ENCODE measurements at regions of chr6 and their contacts with region 1.

Region 1: DNA sequence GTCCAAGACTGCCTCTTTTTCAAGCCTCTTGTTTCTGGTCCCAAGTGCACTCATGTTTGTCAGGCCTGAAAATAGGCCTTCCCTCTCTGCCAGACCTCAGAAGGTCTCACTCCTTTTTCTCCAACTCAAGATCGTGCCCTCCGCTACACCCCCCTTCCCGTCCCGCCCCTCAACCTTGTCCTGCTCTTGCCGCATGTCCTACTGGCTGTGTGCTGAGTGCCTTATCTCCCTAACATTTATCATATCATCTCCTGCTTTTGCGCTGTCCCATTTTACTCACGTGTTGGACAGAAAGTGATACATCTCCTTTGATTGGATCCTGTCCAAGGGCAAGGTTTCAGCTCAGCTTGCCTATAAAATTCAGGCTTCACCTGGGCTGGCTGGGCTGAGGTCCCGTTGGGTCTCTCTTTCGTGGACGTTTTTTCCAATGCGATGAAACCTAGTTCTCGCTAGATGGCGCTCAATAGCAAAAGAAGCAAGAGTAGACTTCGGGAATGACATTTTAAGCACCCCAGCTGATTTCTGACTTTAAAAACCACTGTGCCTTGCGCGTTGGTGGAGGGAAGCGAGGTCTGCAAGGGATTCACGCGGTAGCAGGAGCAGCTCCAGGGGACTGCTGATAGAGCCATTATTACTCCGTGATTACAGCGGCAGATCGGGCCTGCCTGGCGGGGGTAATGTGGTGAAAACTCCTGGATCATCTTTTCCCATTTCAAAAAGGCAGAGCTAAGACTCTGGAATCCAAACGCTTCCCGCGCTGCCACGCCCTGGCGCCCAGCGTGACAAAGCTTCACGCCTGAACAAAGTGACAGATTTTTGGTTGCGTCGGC is 137.6 kb downstream of the IMPG1 start:
- DNase-seq: peak; percentile 16
- H3K4me3 ChIP-seq: peak overlapping the region in 3 of 4 donors; percentile 11 to 34 (median 14)
- H3K27ac ChIP-seq: no peak overlapping the region
- H3K4me1 ChIP-seq: peaks cover 0 to 8% (median 5%) of the 10 kb centered on the region in 4 donors
- H3K27me3 ChIP-seq: peaks cover 8% of the 10 kb centered on the region
- CTCF ChIP-seq: peak; percentile 38 to 66 (median 57)
- EP300 ChIP-seq: no peak
- POLR2A ChIP-seq: no peak

Region 2: DNA sequence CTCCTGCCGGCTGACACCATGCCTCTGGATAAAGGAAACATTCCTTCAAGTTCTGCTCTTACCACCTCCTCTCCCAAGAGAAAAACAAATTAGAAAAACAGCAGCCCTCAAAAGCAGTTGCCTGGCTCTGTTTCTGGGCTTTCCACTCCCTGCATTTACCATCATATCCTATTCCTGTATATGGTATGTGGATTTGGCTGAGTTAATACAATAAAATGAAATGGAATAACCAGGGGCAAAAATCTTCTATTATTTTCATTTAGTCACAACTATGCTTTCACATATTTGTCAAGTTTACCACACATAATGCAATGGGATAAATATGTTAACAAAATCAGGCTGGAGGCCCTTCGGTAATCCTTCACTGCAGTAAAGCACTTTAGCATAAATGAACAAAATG is 763.3 kb before region 1 on chr6:
- in situ Hi-C with region 1: no loop called
- intact Hi-C with region 1: loop called (anchors 5 kb)
- DNase-seq: no peak
- H3K4me3 ChIP-seq: no peak overlapping the region
- H3K27ac ChIP-seq: peak overlapping the region in 3 of 4 donors; percentile 14 to 38 (median 17)
- H3K4me1 ChIP-seq: peaks cover 0 to 22% (median 3%) of the 10 kb centered on the region in 4 donors
- H3K27me3 ChIP-seq: no peaks in the 10 kb centered on the region
- CTCF ChIP-seq: no peak
- EP300 ChIP-seq: no peak
- POLR2A ChIP-seq: no peak

Region 3: GRCh38 chr6:75631859-75632635 is 302.8 kb before region 1 on chr6:
- in situ Hi-C with region 1: no loop called
- intact Hi-C with region 1: no loop called
- DNase-seq: no peak
- H3K4me3 ChIP-seq: no peak overlapping the region
- H3K27ac ChIP-seq: no peak overlapping the region
- H3K4me1 ChIP-seq: peaks cover 0 to 6% (median 0%) of the 10 kb centered on the region in 4 donors
- H3K27me3 ChIP-seq: no peaks in the 10 kb centered on the region
- CTCF ChIP-seq: no peak
- EP300 ChIP-seq: no peak
- POLR2A ChIP-seq: no peak

Region 4: GRCh38 chr6:75808507-75808906 is 126.4 kb before region 1 on chr6:
- in situ Hi-C with region 1: no loop called
- intact Hi-C with region 1: no loop called
- DNase-seq: no peak
- H3K4me3 ChIP-seq: no peak overlapping the region
- H3K27ac ChIP-seq: no peak overlapping the region
- H3K4me1 ChIP-seq: no peaks in the 10 kb centered on the region
- H3K27me3 ChIP-seq: no peaks in the 10 kb centered on the region
- CTCF ChIP-seq: no peak
- EP300 ChIP-seq: no peak
- POLR2A ChIP-seq: no peak

Region 5: DNA sequence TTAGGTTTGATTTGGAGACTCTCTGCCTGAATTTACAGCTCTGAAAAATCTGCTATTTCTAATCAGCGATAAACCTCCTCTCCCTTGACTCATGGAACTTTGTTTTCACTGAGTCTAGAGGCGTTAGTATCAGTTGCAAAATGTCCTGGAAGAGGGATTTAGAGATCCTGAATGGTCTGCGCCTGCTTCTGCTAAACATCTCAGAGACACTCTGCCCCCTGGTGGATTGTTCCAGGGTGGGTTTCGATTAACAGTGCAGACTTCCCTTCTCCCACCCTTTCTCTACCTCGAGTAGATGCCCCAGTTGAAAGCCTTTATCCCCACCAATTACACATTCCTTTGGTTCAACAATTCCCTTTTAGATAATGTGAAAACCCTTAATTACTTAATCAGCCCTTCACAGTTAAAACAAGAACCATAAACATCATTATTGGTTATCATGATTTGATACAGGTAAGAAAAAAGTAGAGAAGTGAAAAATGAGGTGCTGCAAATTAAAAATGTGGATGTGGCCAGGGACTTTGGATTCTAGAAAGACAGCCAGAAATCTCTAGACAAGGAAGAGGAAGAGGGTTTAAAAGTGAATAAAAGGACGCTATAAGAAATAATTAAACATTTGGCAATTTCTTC is 1523.0 kb after region 1 on chr6:
- in situ Hi-C with region 1: loop called in 3 of 4 experiments (anchors 25 kb)
- intact Hi-C with region 1: no loop called
- DNase-seq: peak; percentile 43
- H3K4me3 ChIP-seq: no peak overlapping the region
- H3K27ac ChIP-seq: no peak overlapping the region
- H3K4me1 ChIP-seq: peaks cover 0 to 3% (median under 1%) of the 10 kb centered on the region in 4 donors
- H3K27me3 ChIP-seq: peaks cover 24% of the 10 kb centered on the region
- CTCF ChIP-seq: peak; percentile 48 to 65 (median 54)
- EP300 ChIP-seq: no peak
- POLR2A ChIP-seq: no peak